ENCODE measurements at regions of chr17 and their contacts with region 1.

Region 1: GRCh38 chr17:40191237-40192208 is 14.3 kb downstream of the RAPGEFL1 start:
- DNase-seq: peak; percentile 84
- ATAC-seq: peak; percentile 82
- H3K4me3 Mint-ChIP-seq: peak overlapping the region; percentile 87
- H3K27ac Mint-ChIP-seq: peak overlapping the region; percentile 79
- H3K4me1 Mint-ChIP-seq: peaks cover 14% of the 10 kb centered on the region
- H3K27me3 Mint-ChIP-seq: no peaks in the 10 kb centered on the region
- CTCF ChIP-seq: peak; percentile 68

Region 2: DNA sequence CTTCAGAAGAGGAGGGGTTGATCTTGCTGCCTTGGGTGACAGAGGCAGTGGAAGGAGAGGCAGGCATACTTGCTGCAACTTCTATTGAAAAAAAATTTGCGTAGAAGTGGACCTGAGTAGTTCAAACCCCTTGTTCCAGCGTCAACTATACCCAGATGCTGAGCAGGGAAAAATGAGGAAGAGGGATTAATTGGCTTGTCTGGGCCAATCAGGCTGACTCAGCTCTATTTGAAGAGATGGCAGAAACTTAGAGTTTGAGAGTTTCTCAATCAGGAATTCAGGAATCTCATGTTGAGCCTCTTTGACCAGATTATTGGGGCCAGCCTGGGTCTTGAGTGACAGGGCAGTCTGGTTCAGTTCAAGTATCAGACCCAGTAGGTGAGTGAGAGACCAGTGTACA is 33.5 kb before region 1 on chr17:
- CTCF ChIA-PET with region 1: interaction called, 13 read pairs
- POLR2A ChIA-PET with region 1: interaction called, 3 read pairs
- intact Hi-C with region 1: no loop called
- DNase-seq: no peak
- ATAC-seq: no peak
- H3K4me3 Mint-ChIP-seq: no peak overlapping the region
- H3K27ac Mint-ChIP-seq: peak overlapping the region; percentile 79
- H3K4me1 Mint-ChIP-seq: peaks cover 31% of the 10 kb centered on the region
- H3K27me3 Mint-ChIP-seq: no peaks in the 10 kb centered on the region
- CTCF ChIP-seq: no peak

Region 3: GRCh38 chr17:40168262-40168832 is 23.2 kb before region 1 on chr17:
- CTCF ChIA-PET with region 1: interaction called, 18 read pairs
- POLR2A ChIA-PET with region 1: interaction called, 3 read pairs
- intact Hi-C with region 1: no loop called
- DNase-seq: peak; percentile 50
- ATAC-seq: peak; percentile 89
- H3K4me3 Mint-ChIP-seq: no peak overlapping the region
- H3K27ac Mint-ChIP-seq: peak overlapping the region; percentile 36
- H3K4me1 Mint-ChIP-seq: peaks cover 7% of the 10 kb centered on the region
- H3K27me3 Mint-ChIP-seq: no peaks in the 10 kb centered on the region
- CTCF ChIP-seq: peak; percentile 96

Region 4: DNA sequence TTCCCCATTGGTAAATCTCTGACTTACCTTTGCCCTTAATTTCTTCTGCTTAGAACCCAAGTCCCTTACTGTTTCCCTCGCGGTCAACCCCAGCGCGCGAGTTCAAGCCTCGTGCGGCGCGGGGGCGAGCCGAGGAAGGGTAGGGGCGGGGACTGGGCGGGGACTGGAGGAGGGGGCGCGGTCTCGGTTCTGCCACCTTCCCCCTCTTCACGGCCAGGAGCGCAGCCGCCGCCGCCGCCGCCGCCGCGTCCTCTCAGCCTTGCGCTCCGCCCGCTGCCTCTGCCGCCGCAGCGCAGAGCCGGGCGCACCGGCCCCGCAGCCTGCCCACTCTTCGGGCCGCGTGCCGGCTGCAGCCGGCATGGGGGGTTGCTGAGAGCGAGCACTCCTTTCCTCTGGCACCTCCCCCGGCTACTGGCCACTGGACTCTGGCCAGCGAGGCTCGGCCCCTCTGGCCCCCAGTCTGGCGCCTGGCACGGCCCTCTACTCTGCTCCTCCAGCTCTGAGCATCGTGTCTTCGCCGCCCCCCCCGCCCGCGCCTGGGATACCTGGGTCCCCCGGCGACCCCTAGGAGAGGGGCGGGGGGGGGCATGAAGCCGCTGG is 14.1 kb before region 1 on chr17 and contains the start of gene RAPGEFL1:
- CTCF ChIA-PET with region 1: interaction called, 78 read pairs
- POLR2A ChIA-PET with region 1: interaction called, 6 read pairs
- intact Hi-C with region 1: no loop called
- DNase-seq: peak; percentile 94
- ATAC-seq: peak; percentile 98
- H3K4me3 Mint-ChIP-seq: peak within 1 kb of the TSS; percentile 49
- H3K27ac Mint-ChIP-seq: peak within 1 kb of the TSS; percentile 74
- H3K4me1 Mint-ChIP-seq: peaks cover 18% of the 10 kb centered on the region
- H3K27me3 Mint-ChIP-seq: no peaks in the 10 kb centered on the region
- CTCF ChIP-seq: no peak
- total RNA-seq, gene RAPGEFL1: 3.8 to 5.4 TPM

Region 5: DNA sequence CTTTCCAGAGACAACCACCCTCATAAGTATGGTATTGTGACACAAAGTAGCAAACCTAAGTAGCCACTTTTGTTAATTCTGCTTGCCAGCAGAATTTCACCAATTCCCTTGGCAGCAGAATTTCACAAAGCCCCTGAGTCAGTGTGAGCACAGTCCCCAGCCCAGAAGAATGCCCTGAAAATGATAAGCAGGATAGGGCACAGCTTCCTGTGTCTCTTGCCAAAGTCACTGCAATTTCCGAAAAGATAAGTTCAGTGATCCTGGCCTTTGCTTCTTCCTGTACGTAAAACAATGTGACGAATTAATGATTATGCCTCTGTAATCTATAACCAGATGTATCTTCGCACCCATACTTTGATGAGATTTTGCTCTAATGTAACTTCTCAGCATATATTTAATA is 11.6 kb after region 1 on chr17:
- CTCF ChIA-PET with region 1: interaction called, 45 read pairs
- POLR2A ChIA-PET with region 1: interaction called, 3 read pairs
- intact Hi-C with region 1: no loop called
- DNase-seq: no peak
- ATAC-seq: no peak
- H3K4me3 Mint-ChIP-seq: no peak overlapping the region
- H3K27ac Mint-ChIP-seq: no peak overlapping the region
- H3K4me1 Mint-ChIP-seq: peaks cover 7% of the 10 kb centered on the region
- H3K27me3 Mint-ChIP-seq: peaks cover 3% of the 10 kb centered on the region
- CTCF ChIP-seq: no peak

Region 6: DNA sequence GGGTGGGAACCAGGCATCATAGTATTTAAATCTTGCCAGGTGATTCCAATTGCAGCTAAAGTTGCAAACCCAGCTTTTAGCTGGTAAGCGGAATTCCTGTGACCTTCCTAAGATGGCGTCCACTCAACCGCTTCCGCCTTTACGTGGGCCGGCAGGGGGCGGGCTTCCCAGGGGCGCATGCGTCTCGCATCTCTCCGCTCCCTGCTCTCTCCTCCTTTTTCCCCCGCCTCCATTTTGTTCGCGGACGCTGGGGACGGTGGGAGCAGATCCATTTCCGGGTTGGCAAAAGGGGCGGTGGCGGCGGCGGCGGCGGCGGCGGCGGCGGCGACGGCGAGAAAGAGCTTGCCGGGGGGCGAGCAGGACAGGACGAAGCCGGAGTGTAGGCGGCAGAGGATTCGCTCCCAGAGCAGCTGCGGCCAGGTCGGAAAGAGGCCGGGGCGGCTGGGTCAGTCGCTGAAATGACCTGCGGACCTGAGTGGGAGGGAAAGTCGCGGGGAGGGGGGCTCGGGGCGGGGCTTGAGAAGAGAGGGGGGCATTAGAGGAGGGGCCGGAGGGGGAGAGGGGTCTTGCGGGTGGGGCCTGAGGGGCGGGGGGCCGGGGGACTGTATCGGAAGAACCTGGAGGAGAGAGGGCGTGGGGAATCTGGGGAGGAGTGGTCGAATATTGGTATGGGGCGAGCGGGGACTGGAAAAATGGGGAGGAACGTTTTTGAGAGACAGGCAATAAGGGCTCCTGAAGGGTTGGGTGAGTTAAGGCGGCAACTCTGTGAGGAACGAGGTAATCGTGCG is 27.7 kb after region 1 on chr17 and contains the start of gene WIPF2:
- CTCF ChIA-PET with region 1: interaction called, 22 read pairs
- POLR2A ChIA-PET with region 1: interaction called, 6 read pairs
- intact Hi-C with region 1: no loop called
- DNase-seq: peak; percentile 98
- ATAC-seq: peak; percentile 96
- H3K4me3 Mint-ChIP-seq: peak within 1 kb of the TSS; percentile 96
- H3K27ac Mint-ChIP-seq: peak within 1 kb of the TSS; percentile 100
- H3K4me1 Mint-ChIP-seq: peaks cover 26% of the 10 kb centered on the region
- H3K27me3 Mint-ChIP-seq: no peaks in the 10 kb centered on the region
- CTCF ChIP-seq: no peak
- total RNA-seq, gene WIPF2: 15.3 to 17.9 TPM

Region 7: DNA sequence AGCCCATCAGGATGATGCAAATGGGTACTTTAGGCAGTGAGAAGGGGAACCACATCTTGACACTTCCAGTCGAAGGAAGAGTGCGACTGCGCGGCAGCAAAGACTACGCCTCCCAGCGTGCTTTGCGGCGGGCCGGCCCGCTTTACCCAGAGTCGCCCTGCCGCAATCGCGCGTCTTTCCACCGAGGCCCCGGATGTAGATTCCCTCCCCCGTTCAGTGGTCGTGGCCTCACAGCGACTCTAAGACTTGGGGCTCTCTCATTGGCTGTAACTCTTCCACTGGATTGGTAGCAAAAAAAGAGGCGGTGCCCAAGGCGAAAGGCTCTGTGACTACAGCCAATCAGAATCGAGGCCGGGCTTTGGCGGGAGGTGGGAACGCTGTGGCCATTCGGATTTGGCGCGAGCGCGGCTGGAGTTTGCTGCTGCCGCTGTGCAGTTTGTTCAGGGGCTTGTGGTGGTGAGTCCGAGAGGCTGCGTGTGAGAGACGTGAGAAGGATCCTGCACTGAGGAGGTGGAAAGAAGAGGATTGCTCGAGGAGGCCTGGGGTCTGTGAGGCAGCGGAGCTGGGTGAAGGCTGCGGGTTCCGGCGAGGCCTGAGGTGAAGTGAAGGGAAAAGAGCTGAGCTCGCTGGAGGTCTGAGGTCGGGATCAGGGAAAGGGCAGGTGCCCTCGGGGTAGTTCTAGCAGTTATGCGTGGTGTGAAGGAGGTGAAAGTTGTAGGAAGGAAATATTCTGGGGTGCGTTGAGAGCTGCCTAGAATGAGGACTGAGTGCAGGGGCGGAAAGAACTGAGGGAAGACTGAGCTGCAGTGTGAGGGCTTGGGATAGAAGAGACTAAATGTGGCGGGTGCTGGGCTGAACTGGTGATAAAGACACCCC is 96.2 kb after region 1 on chr17 and contains the start of gene CDC6:
- CTCF ChIA-PET with region 1: interaction called, 11 read pairs
- POLR2A ChIA-PET with region 1: interaction called, 3 read pairs
- intact Hi-C with region 1: no loop called
- DNase-seq: peak; percentile 100
- ATAC-seq: peak; percentile 89
- H3K4me3 Mint-ChIP-seq: peak within 1 kb of the TSS; percentile 99
- H3K27ac Mint-ChIP-seq: peak within 1 kb of the TSS; percentile 96
- H3K4me1 Mint-ChIP-seq: peaks cover 54% of the 10 kb centered on the region
- H3K27me3 Mint-ChIP-seq: no peaks in the 10 kb centered on the region
- CTCF ChIP-seq: no peak
- total RNA-seq, gene CDC6: 110 to 118 TPM

Measured in activated CD8-positive, alpha-beta T cell treated with anti-CD3 and anti-CD28 coated beads for 36 hours (primary cell).